Posterior vena cava (tissue), 2 donors: ENCODE measurements at regions of chr11 and their contacts with region 1.

Region 1: DNA sequence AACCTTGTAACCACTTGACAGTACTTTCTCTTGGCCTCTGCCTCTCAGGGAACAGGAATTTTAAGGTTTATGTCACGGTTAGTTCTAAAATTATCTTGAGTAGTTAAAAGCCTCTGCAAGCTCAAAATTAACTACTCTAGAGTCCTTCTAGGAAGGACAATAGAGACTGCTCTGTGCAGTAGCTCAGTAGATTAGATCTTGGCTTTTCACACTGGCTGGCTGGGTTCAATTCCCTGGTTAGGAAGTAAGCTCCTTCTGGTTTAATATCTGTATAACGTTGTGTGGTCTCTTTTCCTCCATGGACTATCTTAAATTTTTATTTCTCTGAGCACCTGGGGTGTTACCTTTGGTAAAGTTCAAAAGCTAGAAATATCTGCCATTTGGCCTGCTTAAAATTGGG is 109.2 kb downstream of the AASDHPPT start:
- DNase-seq: no peak

Region 2: DNA sequence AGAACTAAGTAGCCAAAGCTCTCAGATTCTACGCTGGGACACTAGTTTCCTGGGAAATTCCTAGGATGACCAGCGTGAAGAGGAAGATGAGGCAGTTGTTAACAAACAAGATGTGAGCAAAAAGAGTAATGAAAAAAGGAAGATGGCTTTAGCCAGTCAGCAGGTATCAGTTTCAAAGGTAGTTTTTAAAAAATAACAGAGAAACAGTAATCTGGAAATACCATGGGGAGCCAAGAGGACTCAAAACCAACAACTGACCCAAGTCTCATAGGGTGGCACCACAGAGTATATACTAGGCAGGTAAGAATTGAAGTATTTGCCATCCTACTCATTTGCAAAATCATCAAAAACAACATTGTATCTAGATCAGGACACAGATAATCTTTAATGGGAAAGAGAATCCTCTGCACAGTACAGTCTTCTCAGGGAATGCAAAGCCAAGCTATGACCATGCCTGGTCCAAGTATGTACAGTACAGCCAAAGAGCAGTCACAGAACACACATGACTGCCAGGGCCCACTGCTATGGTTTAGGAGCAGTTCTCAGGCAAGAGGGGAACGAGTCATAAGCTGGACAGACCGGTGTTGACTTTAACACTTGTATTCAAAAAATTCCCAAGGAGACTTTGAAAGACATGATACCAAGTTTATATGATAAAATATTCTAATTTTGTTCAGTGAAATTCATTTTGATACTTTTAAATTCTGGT is 185.2 kb before region 1 on chr11:
- intact Hi-C with region 1: no loop called
- DNase-seq: no peak

Region 3: DNA sequence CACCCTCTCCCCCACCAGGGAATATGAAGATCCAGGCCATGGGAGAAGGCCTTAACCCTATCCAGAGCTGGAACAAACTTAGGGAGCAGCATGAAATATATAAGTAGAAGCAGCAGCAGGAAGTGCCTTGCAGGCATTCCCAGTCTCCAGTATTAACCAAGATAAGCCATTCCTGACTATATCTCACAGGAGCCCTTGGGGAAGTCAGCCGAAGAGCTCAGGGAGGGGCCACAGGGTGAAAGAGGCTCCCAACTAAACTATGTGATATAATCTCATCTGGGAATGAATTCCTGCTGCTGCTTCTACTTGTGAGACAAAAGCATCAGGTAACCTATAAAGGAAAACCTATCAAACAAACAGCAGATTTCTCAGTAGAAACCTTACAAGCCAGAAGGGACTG is 867.8 kb after region 1 on chr11:
- intact Hi-C with region 1: no loop called
- DNase-seq: no peak

Region 4: DNA sequence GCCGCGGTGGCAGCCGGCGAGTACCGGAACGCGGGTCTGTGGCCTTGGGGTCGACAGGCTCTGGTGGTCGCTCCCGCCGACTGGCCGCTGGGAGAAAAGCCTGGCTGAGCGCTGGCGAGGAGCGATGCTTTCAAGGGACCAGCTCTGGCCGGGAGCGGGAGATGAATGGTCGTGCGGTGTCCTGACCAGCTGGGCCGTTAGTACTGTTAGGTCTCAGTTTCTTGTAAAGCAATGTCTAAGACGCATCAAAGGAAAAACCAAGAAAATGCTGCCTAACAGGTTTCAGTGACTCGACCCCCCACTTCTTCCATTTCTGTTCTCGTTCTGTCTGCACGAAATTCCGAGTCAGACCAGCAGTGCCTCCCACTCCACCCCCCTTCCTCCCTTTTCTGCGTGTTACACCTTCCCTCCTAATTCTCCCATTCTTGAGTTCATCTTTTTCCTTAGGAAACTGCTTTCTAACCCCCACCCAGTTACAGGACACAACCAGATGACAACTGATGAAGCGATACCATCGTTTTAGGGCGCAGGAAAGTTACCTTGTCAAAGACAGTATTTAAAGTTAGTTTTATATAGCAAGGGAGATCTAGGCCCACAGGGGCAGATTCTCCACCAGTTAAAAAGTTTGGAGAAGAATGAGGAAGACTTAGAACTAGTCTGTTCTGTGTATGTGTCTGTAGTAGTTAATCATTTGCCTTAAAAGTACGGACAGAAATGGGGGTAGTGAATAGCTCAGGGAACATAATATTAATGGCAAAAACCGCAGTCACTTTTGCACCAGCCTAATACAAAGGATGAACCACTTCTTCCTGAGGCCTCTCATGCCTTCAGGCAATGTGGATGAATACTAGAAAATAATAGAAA is 1823.1 kb after region 1 on chr11:
- intact Hi-C with region 1: loop called in 1 of 2 experiments (anchors 5 kb)
- DNase-seq: peak; percentile 85